GM12878 (cell line): ENCODE measurements at regions of chr15 and their contacts with region 1.

Region 1: GRCh38 chr15:63986751-63987341 is 59.4 kb downstream of the DAPK2 start:
- DNase-seq: peak; percentile 96
- ATAC-seq: peak; percentile 83
- H3K4me3 ChIP-seq: peak overlapping the region; percentile 1; the same call in 1 of the 2 replicates
- H3K27ac ChIP-seq: peak overlapping the region; percentile 92
- H3K4me1 ChIP-seq: peaks cover 77% of the 10 kb centered on the region
- H3K27me3 ChIP-seq: no peaks in the 10 kb centered on the region
- CTCF ChIP-seq: peak in 1 of 3 experiments; percentile 36; a peak in 2 of 6 replicates
- EP300 ChIP-seq: peak in 1 of 2 experiments; percentile 61; a peak in 2 of 4 replicates
- POLR2A ChIP-seq: no peak
- RAD21 ChIP-seq: peak; percentile 52

Region 2: GRCh38 chr15:63826528-63826927 is 160.3 kb before region 1 on chr15:
- CTCF ChIA-PET with region 1: interaction called, 5 read pairs
- POLR2A ChIA-PET with region 1: interaction called, 4 read pairs
- RAD21 ChIA-PET with region 1: interaction called, 10 read pairs
- SMC1A ChIA-PET with region 1: interaction called, 10 read pairs
- in situ Hi-C with region 1: no loop called
- intact Hi-C with region 1: loop called (anchors 5 kb)
- DNase-seq: no peak
- ATAC-seq: no peak
- H3K4me3 ChIP-seq: no peak overlapping the region
- H3K27ac ChIP-seq: no peak overlapping the region
- H3K4me1 ChIP-seq: no peaks in the 10 kb centered on the region
- H3K27me3 ChIP-seq: no peaks in the 10 kb centered on the region
- CTCF ChIP-seq: peak; percentile 21 to 31 (median 27); a peak in 3 of 6 replicates
- EP300 ChIP-seq: no peak
- POLR2A ChIP-seq: no peak
- RAD21 ChIP-seq: peak; percentile 44

Region 3: GRCh38 chr15:63891079-63891767 is 95.6 kb before region 1 on chr15:
- CTCF ChIA-PET with region 1: interaction called, 81 read pairs
- POLR2A ChIA-PET with region 1: interaction called, 5 read pairs
- RAD21 ChIA-PET with region 1: interaction called, 17 read pairs
- SMC1A ChIA-PET with region 1: interaction called, 36 read pairs
- in situ Hi-C with region 1: no loop called
- intact Hi-C with region 1: loop called (anchors 2 kb)
- DNase-seq: peak; percentile 72
- ATAC-seq: peak; percentile 67
- H3K4me3 ChIP-seq: no peak overlapping the region
- H3K27ac ChIP-seq: peak overlapping the region; percentile 79
- H3K4me1 ChIP-seq: peaks cover 62% of the 10 kb centered on the region
- H3K27me3 ChIP-seq: no peaks in the 10 kb centered on the region
- CTCF ChIP-seq: peak; percentile 80 to 88 (median 86)
- EP300 ChIP-seq: no peak
- POLR2A ChIP-seq: no peak
- RAD21 ChIP-seq: peak; percentile 88

Region 4: DNA sequence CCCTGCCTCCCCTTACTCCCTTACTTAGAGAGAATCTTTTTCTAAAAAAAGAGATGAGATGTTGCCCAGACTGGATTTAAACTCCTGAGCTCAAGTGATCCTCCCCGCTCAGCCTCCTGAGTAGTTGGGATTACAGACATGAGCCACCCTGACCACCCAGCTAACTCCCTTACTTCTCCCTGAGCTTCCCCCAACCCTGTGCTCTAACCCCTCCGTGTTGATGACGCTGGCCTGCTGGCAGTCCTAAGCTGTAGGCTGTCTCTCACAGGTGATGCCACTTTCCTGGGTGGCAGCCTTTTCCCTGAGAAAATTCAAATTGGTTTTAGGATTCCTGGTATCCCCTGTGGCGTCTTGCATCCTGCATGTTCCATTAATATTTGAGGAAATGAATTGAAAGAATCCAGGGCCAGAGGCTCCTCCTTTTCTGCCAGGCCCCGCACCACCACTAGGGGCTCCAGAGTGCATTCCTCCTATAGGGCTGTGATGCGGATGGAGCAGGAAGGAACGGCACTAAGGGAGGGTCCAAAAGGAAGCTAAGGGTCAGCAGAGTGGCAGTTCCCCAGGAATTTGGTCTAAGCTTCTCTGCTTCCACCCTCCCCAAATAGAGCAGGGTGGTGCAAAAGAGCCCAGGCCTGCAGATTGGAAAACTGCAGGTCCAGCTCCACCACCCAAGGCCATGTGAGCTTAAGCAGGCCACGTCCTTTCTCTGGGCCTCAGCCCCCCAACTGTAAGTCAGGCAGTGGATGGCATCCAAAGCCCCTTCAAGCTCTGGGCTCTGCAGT is 41.6 kb before region 1 on chr15:
- CTCF ChIA-PET with region 1: interaction called, 49 read pairs
- POLR2A ChIA-PET with region 1: no interaction called
- RAD21 ChIA-PET with region 1: interaction called, 23 read pairs
- SMC1A ChIA-PET with region 1: interaction called, 19 read pairs
- in situ Hi-C with region 1: no loop called
- intact Hi-C with region 1: loop called (anchors 2 kb)
- DNase-seq: no peak
- ATAC-seq: peak; percentile 89
- H3K4me3 ChIP-seq: no peak overlapping the region
- H3K27ac ChIP-seq: no peak overlapping the region
- H3K4me1 ChIP-seq: peaks cover 13% of the 10 kb centered on the region
- H3K27me3 ChIP-seq: no peaks in the 10 kb centered on the region
- CTCF ChIP-seq: peak; percentile 83 to 99 (median 98)
- EP300 ChIP-seq: no peak
- POLR2A ChIP-seq: no peak
- RAD21 ChIP-seq: peak; percentile 78

Region 5: GRCh38 chr15:64046347-64047153 is 59.7 kb after region 1 on chr15 and contains the start of gene DAPK2:
- CTCF ChIA-PET with region 1: interaction called, 46 read pairs
- POLR2A ChIA-PET with region 1: interaction called, 19 read pairs
- RAD21 ChIA-PET with region 1: interaction called, 104 read pairs
- SMC1A ChIA-PET with region 1: interaction called, 46 read pairs
- in situ Hi-C with region 1: no loop called
- intact Hi-C with region 1: loop called (anchors 2 kb)
- DNase-seq: no peak
- ATAC-seq: peak; percentile 79
- H3K4me3 ChIP-seq: peak within 1 kb of the TSS; percentile 69
- H3K27ac ChIP-seq: peak within 1 kb of the TSS; percentile 55
- H3K4me1 ChIP-seq: peaks cover 36% of the 10 kb centered on the region
- H3K27me3 ChIP-seq: no peaks in the 10 kb centered on the region
- CTCF ChIP-seq: peak; percentile 71 to 81 (median 74)
- EP300 ChIP-seq: no peak
- POLR2A ChIP-seq: no peak; the same call in 1 of the 2 replicates
- RAD21 ChIP-seq: peak; percentile 67
- polyA plus RNA-seq, gene DAPK2: 0.69 to 0.75 TPM

Region 6: GRCh38 chr15:64423970-64424369 is 437.1 kb after region 1 on chr15:
- CTCF ChIA-PET with region 1: no interaction called
- POLR2A ChIA-PET with region 1: no interaction called
- RAD21 ChIA-PET with region 1: no interaction called
- SMC1A ChIA-PET with region 1: no interaction called
- in situ Hi-C with region 1: no loop called
- intact Hi-C with region 1: no loop called
- DNase-seq: peak; percentile 25
- ATAC-seq: peak; percentile 82
- H3K4me3 ChIP-seq: peak overlapping the region; percentile 16; the same call in 1 of the 2 replicates
- H3K27ac ChIP-seq: peak overlapping the region; percentile 62
- H3K4me1 ChIP-seq: peaks cover 14% of the 10 kb centered on the region
- H3K27me3 ChIP-seq: no peaks in the 10 kb centered on the region
- CTCF ChIP-seq: no peak
- EP300 ChIP-seq: peak; percentile 79 to 90; a peak in 3 of 4 replicates
- POLR2A ChIP-seq: no peak
- RAD21 ChIP-seq: no peak